Mucosa of descending colon (tissue), 3 donors: ENCODE measurements at regions of chr21 and their contacts with region 1.

Region 1: DNA sequence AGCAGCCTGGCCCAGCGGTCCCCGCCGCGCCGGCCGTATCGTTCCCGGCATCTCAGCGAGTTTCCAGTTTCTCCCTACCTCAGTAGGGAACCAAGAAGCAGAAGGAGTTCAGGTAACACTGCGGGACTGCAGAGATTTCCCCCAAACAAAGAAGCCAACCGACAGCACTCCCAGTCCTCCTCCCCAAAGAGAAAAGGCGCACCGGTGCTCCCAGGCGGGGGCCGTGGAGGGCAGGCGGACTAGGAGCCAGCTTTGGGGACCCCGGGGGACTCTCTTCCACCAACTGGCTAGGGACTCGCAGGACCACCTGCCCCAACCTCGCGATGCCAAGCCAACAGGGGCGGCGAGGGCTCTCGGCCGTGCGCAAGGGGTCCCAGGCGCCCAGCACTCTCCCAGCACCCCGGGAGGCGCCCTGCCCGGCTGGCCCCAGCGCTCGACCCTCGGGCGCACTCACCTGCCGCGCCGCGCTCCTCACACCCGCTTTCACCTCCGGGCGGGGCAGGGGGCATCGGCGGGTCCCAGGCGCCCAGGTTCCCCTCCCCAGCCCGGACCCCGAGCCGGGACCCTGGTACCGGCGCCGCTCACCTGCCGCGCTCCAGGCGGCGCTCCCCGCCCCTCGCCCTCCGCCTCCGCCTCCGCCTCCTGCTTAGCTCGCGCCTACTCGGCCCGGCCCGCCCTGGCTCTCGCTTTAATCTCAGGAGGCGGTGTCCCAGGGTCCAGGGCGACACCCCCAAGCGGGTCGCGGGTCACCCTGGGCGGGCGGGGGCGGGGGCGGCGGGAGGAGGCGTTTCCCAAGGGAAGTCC is at the start of gene TMPRSS2:
- DNase-seq: peak; percentile 86 to 93 (median 88)
- ATAC-seq: peak; percentile 78
- H3K4me3 ChIP-seq: peak within 1 kb of the TSS; percentile 61
- H3K4me1 ChIP-seq: peaks cover 13% of the 10 kb centered on the region
- CTCF ChIP-seq: no peak
- total RNA-seq, gene TMPRSS2: 283 to 624 (median 566) TPM

Region 2: DNA sequence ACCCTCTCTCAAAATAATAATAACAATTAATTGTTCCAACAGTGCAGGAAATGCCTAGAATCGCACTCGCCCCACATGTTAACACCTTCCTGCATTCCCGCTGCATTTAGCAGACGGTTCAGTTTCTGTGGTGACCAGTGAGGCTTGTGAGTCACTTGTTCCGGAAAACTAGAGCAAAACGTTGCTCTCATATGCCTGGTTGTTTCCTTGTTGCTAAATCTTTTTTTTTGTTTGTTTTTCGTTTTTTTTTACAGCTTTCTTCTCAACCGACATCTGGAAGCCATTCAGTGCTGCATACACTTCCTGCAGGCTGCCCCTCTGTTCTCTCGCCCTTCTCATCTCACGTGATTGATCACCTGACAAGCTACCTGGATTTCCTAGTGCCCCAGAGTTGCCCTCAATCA is 57.2 kb after region 1 on chr21:
- intact Hi-C with region 1: loop called in 1 of 2 experiments (anchors 10 kb)
- DNase-seq: peak in 2 of 3 donors; percentile 61 to 82
- ATAC-seq: peak; percentile 55
- H3K4me3 ChIP-seq: no peak overlapping the region
- H3K4me1 ChIP-seq: peaks cover 60% of the 10 kb centered on the region
- CTCF ChIP-seq: no peak